GM13977 (cell line): ENCODE measurements at regions of chr20 and their contacts with region 1.

Region 1: DNA sequence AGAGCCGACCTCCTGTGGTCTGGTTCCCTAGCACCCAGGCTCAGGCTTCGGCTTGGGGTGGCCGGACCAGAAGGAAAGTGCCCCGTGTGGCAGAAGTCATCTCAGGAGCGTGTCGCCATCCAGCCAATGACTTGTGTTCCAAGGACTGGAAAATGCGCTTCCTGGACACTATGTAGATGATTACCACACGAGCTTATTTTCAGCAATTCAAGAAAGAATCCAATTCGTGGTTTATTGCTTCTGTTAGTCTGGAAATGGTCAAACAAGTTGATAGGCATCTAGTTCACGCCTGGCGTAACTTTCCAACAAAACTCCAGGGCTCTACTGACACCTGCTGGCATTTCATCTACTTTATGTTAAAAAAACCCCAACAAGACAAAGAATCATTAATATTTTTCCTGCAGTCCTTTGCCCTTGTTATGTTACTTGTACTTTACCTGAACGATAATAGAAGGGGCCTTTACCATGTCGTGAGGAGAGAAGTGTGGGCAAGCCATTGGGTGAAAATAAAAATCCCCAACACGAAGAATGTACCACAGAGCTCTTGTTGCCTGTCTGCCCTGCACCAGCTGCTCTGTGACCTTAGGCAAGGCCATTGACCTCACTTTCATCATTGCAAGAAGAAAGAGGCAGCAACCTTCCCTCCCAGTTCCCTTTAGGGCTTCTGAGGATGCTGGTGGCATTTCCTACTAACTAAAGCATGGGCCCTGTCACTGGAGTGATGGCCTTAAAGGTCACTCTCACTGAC is 154.7 kb upstream of the LAMP5 start:
- DNase-seq: no peak
- CTCF ChIP-seq: peak; percentile 16

Region 2: DNA sequence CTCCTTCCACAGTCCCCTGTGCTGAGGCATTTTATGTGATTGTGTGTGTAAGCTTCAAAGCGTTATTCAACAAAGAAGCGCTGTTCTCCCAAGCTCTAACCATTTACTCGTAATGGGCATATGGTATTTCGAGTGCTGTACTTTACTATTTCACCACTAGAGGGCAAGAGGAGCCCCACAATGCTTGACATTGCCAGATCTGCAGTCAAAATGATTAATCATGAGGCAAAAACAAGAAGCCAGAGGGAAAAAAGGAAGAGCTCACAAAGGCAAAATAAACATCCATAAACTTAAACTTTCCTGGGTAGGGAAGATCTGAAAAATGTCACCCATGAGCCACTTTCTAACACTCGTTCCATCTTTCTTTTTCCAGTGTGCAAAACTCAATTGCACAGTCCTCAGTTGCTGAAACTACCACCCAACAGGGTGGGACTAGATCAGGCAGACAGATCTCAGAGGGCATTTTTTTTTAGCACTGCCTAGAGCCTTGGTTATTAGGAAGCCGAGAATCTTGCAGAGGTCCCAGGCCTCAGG is 505.9 kb before region 1 on chr20:
- in situ Hi-C with region 1: loop called (anchors 25 kb)
- DNase-seq: peak; percentile 53
- CTCF ChIP-seq: peak; percentile 86

Region 3: DNA sequence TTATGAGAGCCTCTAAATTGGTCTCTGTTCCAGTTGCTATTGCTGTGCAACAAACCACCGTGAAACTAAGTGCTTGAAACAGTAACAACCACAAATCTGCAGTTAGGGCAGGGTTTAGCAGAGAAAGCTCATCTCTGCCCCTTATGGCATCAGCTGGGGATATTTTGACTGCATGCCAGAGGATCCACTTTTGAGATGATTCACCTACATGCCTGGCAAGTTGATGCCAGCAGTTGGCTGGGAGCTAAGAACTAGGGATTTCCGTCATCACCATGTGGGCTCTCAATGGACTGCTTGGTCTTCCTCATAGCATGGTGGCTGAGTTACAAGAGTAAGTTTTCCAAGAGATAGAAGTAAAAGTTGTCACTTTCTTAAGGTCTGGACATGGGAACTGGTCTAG is 255.8 kb before region 1 on chr20:
- in situ Hi-C with region 1: no loop called
- DNase-seq: no peak
- CTCF ChIP-seq: no peak

Region 4: GRCh38 chr20:9270831-9271230 is 88.9 kb before region 1 on chr20:
- in situ Hi-C with region 1: no loop called
- DNase-seq: no peak
- CTCF ChIP-seq: no peak